ENCODE measurements at regions of chr6 and their contacts with region 1.

Region 1: DNA sequence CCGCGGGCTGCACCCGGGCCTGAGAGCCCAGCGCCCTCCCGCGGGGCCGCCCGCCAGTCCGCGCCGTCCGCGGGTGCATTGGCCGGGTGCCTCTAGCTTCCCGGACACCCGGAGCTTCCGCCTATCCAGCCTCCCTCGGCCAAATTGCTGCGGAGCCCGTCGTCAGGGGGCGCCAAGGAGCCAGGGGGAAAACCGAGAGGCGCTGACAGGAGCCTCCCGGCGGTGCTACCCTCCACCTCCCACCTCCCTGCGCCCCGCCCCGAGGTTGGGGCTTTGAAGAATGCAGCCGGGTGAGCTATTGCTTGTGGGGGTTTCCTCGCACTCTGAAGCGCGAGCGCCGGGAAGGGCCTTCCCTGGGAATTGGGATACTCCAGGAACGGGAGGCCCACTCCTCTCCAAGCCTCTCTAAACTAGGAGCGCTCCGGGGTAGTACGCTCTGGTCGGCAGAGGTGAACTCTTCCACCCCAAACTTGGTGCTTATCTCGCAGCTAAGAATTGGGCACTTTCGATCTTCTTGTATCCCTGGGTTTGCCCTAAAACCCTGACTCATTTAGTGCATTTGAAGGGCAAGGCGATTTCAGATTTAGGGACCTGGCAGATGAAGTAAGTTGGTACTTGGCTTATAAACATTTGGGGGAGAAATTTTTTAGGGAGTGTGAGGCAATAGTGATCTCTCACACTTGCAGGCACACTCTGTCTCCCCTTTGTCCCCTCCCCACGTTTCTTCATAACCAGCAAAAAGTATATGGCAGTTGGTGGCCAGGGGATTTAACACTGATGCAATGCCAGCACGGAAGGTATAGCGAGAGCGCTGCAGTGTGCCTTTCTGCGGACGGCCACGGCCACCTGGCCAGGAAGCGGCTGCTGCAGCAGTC is 501 bp downstream of the BEND6 start:
- DNase-seq: peak; percentile 42
- H3K4me3 ChIP-seq: peak overlapping the region; percentile 96
- H3K27me3 ChIP-seq: no peaks in the 10 kb centered on the region
- CTCF ChIP-seq: peak; percentile 92

Region 2: GRCh38 chr6:56902641-56903464 is 52.6 kb before region 1 on chr6:
- CTCF ChIA-PET with region 1: interaction called, 60 read pairs
- POLR2A ChIA-PET with region 1: no interaction called
- DNase-seq: no peak
- H3K4me3 ChIP-seq: no peak overlapping the region
- H3K27me3 ChIP-seq: no peaks in the 10 kb centered on the region
- CTCF ChIP-seq: peak; percentile 69

Region 3: DNA sequence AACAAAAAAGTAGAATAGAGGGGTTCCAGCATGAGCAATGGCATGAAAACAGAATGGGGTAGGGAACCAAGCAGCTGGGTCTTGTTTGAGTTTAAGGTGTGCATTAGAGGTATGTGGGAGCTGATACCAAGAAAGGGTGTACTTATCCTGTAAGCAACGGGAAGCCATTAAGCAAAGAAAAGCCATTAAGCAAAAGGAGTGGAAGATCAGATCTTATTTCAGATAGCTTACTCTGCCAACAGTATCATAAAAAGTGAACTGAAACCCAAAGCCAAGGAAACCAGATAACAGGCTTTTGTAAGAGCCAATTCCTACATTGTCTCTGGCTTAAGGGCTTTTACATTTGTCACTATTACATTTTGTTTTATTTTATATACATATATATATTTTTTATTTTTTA is 21.8 kb before region 1 on chr6:
- CTCF ChIA-PET with region 1: interaction called, 12 read pairs
- POLR2A ChIA-PET with region 1: no interaction called
- DNase-seq: no peak
- H3K4me3 ChIP-seq: no peak overlapping the region
- H3K27me3 ChIP-seq: no peaks in the 10 kb centered on the region
- CTCF ChIP-seq: no peak

Region 4: GRCh38 chr6:56938649-56939191 is 16.7 kb before region 1 on chr6:
- CTCF ChIA-PET with region 1: interaction called, 12 read pairs
- POLR2A ChIA-PET with region 1: no interaction called
- DNase-seq: peak; percentile 94
- H3K4me3 ChIP-seq: no peak overlapping the region
- H3K27me3 ChIP-seq: no peaks in the 10 kb centered on the region
- CTCF ChIP-seq: no peak

Region 5: GRCh38 chr6:57021086-57021720 is 65.8 kb after region 1 on chr6:
- CTCF ChIA-PET with region 1: interaction called, 12 read pairs
- POLR2A ChIA-PET with region 1: no interaction called
- DNase-seq: peak; percentile 19
- H3K4me3 ChIP-seq: no peak overlapping the region
- H3K27me3 ChIP-seq: no peaks in the 10 kb centered on the region
- CTCF ChIP-seq: peak; percentile 43